ENCODE measurements at regions of chr17 and their contacts with region 1.

Region 1: GRCh38 chr17:45021607-45022287 is 29.7 kb downstream of the DCAKD start:
- H3K4me3 ChIP-seq: peak overlapping the region; percentile 3; the same call in 1 of the 2 replicates
- H3K27ac ChIP-seq: no peak overlapping the region; the same call in 1 of the 2 replicates
- H3K4me1 ChIP-seq: peaks cover 3% of the 10 kb centered on the region; the same call in 1 of the 2 replicates
- CTCF ChIP-seq: 0 out of 2 replicates have a peak, but pooled peaks have one; percentile 28

Region 2: DNA sequence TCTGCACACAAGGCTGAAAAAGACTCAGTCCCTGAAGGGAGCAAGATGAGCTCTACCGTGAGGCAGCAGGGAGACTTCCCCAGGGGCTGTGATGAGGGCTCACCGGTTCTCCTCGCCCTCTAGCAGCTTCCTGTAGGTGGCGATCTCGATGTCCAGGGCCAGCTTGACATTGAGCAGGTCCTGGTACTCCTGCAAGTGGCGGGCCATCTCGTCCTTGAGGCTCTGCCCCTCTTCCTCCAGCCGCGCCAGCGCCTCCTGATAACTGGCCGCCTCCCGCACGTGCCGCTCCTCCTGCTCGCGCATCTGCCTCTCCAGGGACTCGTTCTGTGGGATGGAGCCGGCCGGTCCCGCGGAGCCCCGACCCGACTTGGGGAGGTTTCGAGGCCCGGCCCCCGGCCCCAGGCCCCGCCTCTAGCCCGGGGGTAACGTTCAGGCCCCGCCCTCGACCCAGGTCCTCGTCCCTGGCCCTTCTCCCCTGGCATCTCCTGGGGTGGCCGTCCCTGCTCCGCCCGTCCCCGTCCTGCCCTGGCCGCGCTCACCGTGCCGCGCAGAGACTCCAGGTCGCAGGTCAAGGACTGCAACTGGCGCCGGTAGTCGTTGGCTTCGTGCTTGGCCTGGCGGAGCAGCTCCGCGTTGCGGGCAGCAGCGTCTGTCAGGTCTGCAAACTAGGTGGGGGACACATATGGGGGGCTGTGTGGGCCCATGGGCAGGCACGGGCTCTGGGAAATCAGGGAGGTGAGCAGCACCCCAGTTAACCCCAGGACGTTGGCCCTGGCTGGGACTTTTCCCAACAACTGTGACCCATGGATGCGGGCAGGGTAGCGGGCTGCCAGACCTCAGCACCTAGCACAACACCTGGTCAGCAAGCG is 110.4 kb before region 1 on chr17:
- CTCF ChIA-PET with region 1: interaction called, 24 read pairs
- POLR2A ChIA-PET with region 1: no interaction called
- H3K4me3 ChIP-seq: no peak overlapping the region
- H3K27ac ChIP-seq: no peak overlapping the region
- H3K4me1 ChIP-seq: no peaks in the 10 kb centered on the region; the same call in 1 of the 2 replicates
- CTCF ChIP-seq: peak; percentile 64

Region 3: GRCh38 chr17:44932496-44933097 is 89.2 kb before region 1 on chr17:
- CTCF ChIA-PET with region 1: interaction called, 23 read pairs
- POLR2A ChIA-PET with region 1: no interaction called
- H3K4me3 ChIP-seq: no peak overlapping the region
- H3K27ac ChIP-seq: no peak overlapping the region
- H3K4me1 ChIP-seq: no peaks in the 10 kb centered on the region
- CTCF ChIP-seq: no peak

Region 4: GRCh38 chr17:44981221-44981968 is 40.4 kb before region 1 on chr17:
- CTCF ChIA-PET with region 1: interaction called, 26 read pairs
- POLR2A ChIA-PET with region 1: no interaction called
- H3K4me3 ChIP-seq: no peak overlapping the region
- H3K27ac ChIP-seq: no peak overlapping the region
- H3K4me1 ChIP-seq: peaks cover 5% of the 10 kb centered on the region; the same call in 1 of the 2 replicates
- CTCF ChIP-seq: no peak

Region 5: GRCh38 chr17:45051060-45051719 is 29.4 kb after region 1 on chr17 and contains the start of gene DCAKD:
- CTCF ChIA-PET with region 1: interaction called, 11 read pairs
- POLR2A ChIA-PET with region 1: interaction called, 3 read pairs
- H3K4me3 ChIP-seq: peak within 1 kb of the TSS; percentile 49
- H3K27ac ChIP-seq: peak within 1 kb of the TSS; percentile 99
- H3K4me1 ChIP-seq: peaks cover 10% of the 10 kb centered on the region; the same call in 1 of the 2 replicates
- CTCF ChIP-seq: no peak